ENCODE measurements at regions of chr17 and their contacts with region 1.

Region 1: GRCh38 chr17:32609085-32609484 is 122.3 kb downstream of the CDK5R1 start:
- DNase-seq: peak; percentile 78
- H3K4me3 ChIP-seq: no peak overlapping the region
- H3K27ac ChIP-seq: no peak overlapping the region
- H3K4me1 ChIP-seq: no peaks in the 10 kb centered on the region
- CTCF ChIP-seq: peak; percentile 83

Region 2: DNA sequence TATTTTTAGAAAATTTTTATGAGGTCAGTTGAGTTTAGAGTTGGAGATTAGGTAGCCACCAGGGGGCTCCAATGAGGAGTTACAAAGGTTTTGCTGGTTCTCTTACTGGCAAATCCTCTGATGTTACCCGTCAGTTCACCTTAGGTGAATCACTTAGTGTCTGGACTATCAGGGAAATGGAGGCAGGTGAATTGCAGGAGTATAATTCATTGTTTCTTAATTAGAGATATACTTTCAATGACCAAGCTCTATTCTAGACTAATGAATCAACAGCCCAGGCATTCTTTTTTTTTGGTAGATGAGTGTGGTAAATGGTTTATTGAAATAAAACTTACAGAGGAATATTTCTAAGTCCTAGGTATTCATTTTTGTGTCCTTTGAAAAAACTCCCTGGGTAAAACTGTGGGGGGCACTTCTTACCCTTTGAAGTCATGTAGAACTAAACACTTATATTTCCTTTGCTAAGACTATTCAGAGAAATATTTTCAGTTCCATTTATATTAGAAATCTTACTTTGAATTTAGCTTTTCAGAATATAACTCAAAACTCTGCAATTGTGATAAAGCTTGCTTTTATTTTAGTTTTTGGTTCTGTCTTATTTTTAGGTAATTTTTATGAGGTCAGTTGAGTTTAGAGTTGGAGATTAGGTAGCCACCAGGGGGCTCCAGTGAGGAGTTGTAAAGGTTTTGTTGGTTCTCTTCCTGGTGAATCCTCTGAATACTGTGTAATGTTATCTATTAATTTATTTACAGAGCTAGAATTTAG is 147.1 kb before region 1 on chr17:
- CTCF ChIA-PET with region 1: no interaction called
- POLR2A ChIA-PET with region 1: no interaction called
- intact Hi-C with region 1: loop called (anchors 5 kb)
- DNase-seq: peak; percentile 66
- H3K4me3 ChIP-seq: no peak overlapping the region
- H3K27ac ChIP-seq: no peak overlapping the region
- H3K4me1 ChIP-seq: no peaks in the 10 kb centered on the region
- CTCF ChIP-seq: peak; percentile 78

Region 3: DNA sequence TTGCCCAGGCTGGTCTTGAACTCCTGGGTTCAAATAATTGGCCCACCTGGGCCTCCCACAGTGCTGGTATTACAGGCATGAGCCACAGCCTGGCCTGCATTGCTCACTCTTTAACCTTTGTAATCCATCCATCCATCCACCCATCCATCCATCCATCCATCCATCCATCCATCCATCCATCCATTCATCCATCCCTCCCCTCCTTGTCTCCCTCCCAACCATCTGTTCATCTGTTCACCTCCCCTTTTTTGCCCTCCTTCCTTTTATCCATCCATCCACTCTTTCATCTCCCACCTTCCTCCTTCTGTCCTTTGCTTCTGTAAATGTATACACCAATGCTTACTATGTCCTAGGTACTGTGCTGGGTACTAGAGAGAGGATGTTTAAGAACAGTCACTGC is 56.8 kb before region 1 on chr17:
- CTCF ChIA-PET with region 1: no interaction called
- POLR2A ChIA-PET with region 1: no interaction called
- intact Hi-C with region 1: no loop called
- DNase-seq: no peak
- H3K4me3 ChIP-seq: no peak overlapping the region
- H3K27ac ChIP-seq: no peak overlapping the region
- H3K4me1 ChIP-seq: peaks cover 19% of the 10 kb centered on the region
- CTCF ChIP-seq: no peak